ENCODE measurements at regions of chr19 and their contacts with region 1.

Region 1: DNA sequence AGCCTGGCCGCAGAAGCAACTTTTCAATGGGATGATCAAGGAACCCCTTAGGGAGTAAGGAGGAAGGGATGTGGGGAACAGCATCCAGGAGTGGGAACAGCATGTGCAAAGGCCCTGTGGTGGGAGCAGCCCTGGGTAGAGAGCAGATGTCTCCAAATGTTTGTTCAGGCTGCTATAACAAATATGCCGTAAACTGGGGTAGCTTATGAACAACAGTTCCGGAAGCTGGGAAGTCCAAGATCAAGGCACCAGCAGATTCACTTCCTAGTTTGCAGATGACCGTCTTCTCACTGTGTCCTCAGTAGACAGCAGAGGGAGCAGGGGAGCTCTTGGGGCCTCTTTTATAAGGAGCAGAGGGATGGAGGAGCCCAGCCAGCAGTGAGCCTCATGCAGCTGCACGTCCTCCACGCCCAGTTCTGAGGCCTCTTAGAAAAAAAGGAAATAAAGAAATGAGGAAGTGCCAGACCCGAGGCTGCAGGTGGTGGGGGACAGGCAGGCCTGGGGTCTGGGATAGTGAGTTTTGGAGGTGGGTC is 4.2 kb upstream of the LRRC25 start:
- DNase-seq: peak; percentile 77 to 79
- H3K4me3 ChIP-seq: no peak overlapping the region
- H3K27ac ChIP-seq: no peak overlapping the region
- H3K4me1 ChIP-seq: no peaks in the 10 kb centered on the region
- H3K27me3 ChIP-seq: peaks cover 0 to 37% of the 10 kb centered on the region in 2 donors
- CTCF ChIP-seq: no peak

Region 2: GRCh38 chr19:18259893-18260292 is 141.8 kb before region 1 on chr19:
- intact Hi-C with region 1: loop called (anchors 10 kb)
- DNase-seq: no peak
- H3K4me3 ChIP-seq: no peak overlapping the region
- H3K27ac ChIP-seq: no peak overlapping the region
- H3K4me1 ChIP-seq: no peaks in the 10 kb centered on the region
- H3K27me3 ChIP-seq: no peaks in the 10 kb centered on the region
- CTCF ChIP-seq: no peak

Region 3: GRCh38 chr19:18349524-18350128 is 52.0 kb before region 1 on chr19:
- intact Hi-C with region 1: loop called (anchors 5 kb)
- DNase-seq: peak in 1 of 2 donors; percentile 48
- H3K4me3 ChIP-seq: no peak overlapping the region
- H3K27ac ChIP-seq: no peak overlapping the region
- H3K4me1 ChIP-seq: no peaks in the 10 kb centered on the region
- H3K27me3 ChIP-seq: no peaks in the 10 kb centered on the region
- CTCF ChIP-seq: peak; percentile 64 to 69

Measured in tibial artery (tissue), 4 donors.